Psoas muscle (tissue), 8 donors: ENCODE measurements at regions of chr7 and their contacts with region 1.

Region 1: GRCh38 chr7:142053988-142054387 is 57.5 kb upstream of the MGAM2 start:
- DNase-seq: no peak
- ATAC-seq: no peak
- H3K4me3 ChIP-seq: no peak overlapping the region
- H3K27ac ChIP-seq: no peak overlapping the region
- H3K4me1 ChIP-seq: no peaks in the 10 kb centered on the region
- H3K27me3 ChIP-seq: no peaks in the 10 kb centered on the region
- CTCF ChIP-seq: no peak

Region 2: DNA sequence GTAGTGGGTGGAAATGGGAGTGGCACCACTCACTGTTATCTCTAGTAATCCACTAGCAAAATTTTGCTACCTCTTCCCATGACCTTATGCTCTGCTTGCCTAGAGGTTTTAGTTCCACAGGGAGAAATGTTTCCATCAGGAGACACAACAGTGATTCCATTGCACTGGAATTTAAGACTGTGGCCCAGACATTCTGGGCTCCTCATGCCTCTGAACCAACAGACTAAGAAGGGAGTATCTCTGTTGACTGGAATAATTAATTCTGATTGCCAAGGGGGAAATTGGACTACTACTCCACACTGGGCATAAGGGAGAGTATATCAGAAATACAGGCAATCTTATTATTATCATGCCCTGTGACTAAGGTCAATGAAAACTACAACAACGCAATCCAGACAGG is 1113.1 kb before region 1 on chr7:
- intact Hi-C with region 1: no loop called
- DNase-seq: no peak
- ATAC-seq: no peak
- H3K4me3 ChIP-seq: no peak overlapping the region
- H3K27ac ChIP-seq: no peak overlapping the region
- H3K4me1 ChIP-seq: no peaks in the 10 kb centered on the region
- H3K27me3 ChIP-seq: peaks cover 0 to 3% (median 0%) of the 10 kb centered on the region in 3 donors
- CTCF ChIP-seq: no peak

Region 3: GRCh38 chr7:142001163-142001874 is 52.7 kb before region 1 on chr7:
- intact Hi-C with region 1: no loop called
- DNase-seq: no peak
- ATAC-seq: no peak
- H3K4me3 ChIP-seq: no peak overlapping the region
- H3K27ac ChIP-seq: no peak overlapping the region
- H3K4me1 ChIP-seq: no peaks in the 10 kb centered on the region
- H3K27me3 ChIP-seq: no peaks in the 10 kb centered on the region
- CTCF ChIP-seq: no peak

Region 4: DNA sequence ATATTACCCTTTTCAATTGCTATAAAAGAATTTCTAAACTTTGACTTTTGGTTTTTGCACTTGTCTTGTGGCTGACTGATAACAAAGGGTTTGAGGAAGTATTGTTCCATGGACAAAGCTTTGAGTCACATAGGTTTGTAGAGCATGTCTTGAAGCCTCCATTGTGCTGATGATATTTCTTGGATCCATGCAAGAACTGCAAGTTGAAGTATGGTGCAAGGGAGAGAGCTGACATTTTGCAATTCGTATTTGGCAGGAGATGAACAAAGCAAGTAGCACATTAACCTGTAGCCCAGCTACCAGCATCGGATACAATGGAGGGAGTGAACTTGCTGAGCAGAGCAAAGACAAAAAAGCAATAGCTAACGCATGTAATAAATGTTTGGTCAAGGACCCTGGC is 80.9 kb after region 1 on chr7:
- intact Hi-C with region 1: loop called in 1 of 2 experiments (anchors 10 kb)
- DNase-seq: no peak
- ATAC-seq: no peak
- H3K4me3 ChIP-seq: no peak overlapping the region
- H3K27ac ChIP-seq: no peak overlapping the region
- H3K4me1 ChIP-seq: no peaks in the 10 kb centered on the region
- H3K27me3 ChIP-seq: no peaks in the 10 kb centered on the region
- CTCF ChIP-seq: no peak

Region 5: DNA sequence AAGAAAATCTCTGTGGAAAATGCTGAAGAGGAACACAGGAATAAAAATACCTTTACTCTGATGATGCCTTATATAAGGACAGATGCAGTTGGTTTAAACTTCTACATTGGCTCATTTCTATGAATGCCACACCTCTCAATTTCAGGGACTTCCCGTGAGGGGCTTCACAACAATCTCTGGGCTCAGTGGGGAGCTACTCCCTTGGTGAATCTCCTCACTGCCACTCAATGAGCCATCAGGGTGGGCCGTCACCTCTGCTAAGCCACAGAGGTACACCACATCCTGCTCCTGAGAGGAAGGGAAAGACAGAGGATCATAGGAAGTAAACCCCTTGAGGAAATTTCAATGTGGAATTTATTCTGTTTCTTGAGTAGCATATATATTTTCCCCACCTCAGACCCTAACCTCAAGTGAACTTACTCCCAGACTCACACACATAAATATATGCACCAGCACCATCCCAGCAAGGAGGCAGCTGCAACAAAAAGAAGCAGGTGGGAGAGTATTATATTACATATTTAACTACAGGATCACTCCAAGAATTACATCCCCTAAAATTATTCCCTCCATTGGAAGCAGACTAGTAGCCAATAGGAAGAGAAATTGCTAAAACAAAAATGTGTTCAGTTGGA is 632.0 kb after region 1 on chr7:
- intact Hi-C with region 1: no loop called
- DNase-seq: no peak
- ATAC-seq: no peak
- H3K4me3 ChIP-seq: no peak overlapping the region
- H3K27ac ChIP-seq: no peak overlapping the region
- H3K4me1 ChIP-seq: no peaks in the 10 kb centered on the region
- H3K27me3 ChIP-seq: no peaks in the 10 kb centered on the region
- CTCF ChIP-seq: no peak